ENCODE measurements at regions of chr1 and their contacts with region 1.

Region 1: GRCh38 chr1:158117854-158118704 is 62.6 kb upstream of the CD1D start:
- DNase-seq: no peak
- ATAC-seq: peak; percentile 93
- H3K4me3 ChIP-seq: peak overlapping the region; percentile 12 to 40
- H3K27ac ChIP-seq: no peak overlapping the region
- H3K4me1 ChIP-seq: peaks cover 6% of the 10 kb centered on the region; the same call in 1 of the 2 replicates
- H3K27me3 ChIP-seq: peaks cover 4% of the 10 kb centered on the region; the same call in 1 of the 2 replicates
- CTCF ChIP-seq: peak; percentile 85

Region 2: DNA sequence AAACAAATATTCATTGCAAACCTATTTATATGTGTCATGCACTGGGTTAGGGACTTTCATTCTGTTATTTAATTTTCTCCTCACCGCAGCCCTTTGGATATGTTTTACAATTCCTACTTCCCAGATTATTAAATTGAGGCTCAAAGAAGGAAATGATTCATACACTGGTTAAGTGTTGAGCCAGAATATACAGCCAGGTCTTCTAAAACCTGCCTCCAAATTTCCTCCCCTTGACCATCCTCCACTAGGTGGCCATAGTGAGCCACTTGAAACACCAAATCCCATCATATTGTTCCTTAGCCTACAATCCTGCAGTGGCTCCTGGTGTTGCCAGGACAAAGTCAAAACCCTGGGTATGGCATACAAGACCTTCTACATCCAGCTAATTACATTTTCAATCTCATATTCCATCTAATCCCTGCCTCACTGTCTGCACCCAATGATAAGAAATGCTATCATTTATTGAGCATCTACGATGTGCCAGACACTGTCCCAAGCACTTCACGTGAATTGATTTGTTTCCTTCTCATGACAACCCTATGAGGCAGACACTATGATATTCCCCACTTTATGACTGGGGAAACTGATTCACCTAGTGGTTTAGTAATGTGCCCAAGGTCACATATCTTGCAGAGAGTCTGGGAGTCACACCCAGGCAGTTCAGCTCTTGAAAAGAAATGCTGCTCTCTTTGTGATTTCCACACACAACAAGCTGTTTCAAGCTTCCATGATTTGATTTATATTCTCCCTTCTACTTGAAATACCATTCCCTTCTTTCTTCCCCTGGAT is 148.2 kb before region 1 on chr1:
- CTCF ChIA-PET with region 1: interaction called, 14 read pairs
- POLR2A ChIA-PET with region 1: no interaction called
- in situ Hi-C with region 1: no loop called
- intact Hi-C with region 1: no loop called
- DNase-seq: no peak
- ATAC-seq: peak; percentile 88
- H3K4me3 ChIP-seq: no peak overlapping the region
- H3K27ac ChIP-seq: no peak overlapping the region
- H3K4me1 ChIP-seq: no peaks in the 10 kb centered on the region; the same call in 1 of the 2 replicates
- H3K27me3 ChIP-seq: no peaks in the 10 kb centered on the region; the same call in 1 of the 2 replicates
- CTCF ChIP-seq: peak; percentile 90

Measured in Panc1 (cell line).